Heart right ventricle (tissue), 16 donors: ENCODE measurements at regions of chr5 and their contacts with region 1.

Region 1: DNA sequence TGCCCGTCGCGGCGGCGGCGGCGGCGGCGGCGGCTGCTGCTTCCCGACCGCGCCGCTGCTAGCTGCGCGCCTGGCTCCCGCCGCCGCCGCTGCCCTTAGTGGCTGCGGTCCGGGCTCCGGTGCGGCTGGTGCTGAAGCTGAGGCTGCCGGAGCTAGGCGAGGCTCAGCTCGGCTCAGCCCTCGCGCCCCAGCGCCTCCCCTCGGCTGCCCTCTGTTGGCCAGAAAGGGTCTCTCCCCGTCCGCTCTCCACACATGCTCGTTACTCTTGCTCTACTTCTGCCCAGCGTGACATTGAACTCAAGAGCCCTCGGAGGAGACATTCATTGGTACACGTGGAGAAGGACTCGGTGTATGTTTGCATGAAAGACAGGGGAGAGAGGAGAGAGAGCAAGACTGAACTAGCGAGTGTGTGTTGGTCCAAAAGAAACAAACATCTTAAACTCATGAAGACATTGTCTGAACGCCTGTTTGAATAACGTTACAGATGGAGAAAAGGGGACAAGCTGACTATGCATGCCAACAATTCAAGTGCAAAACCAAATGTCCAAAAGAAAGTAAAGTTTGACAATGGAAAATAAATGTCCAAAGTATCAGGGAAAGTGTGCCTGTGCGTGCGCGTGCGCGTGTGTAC is at the start of gene HCN1:
- DNase-seq: peak; percentile 59 to 80
- ATAC-seq: peak; percentile 93 to 100 (median 98)
- H3K4me3 ChIP-seq: peak within 1 kb of the TSS in 9 of 10 donors; percentile 10 to 27 (median 20)
- H3K27ac ChIP-seq: no peak within 1 kb of the TSS
- H3K4me1 ChIP-seq: peaks cover 5 to 13% (median 10%) of the 10 kb centered on the region in 9 donors
- H3K27me3 ChIP-seq: peaks cover 6 to 80% (median 44%) of the 10 kb centered on the region in 7 donors
- CTCF ChIP-seq: peak; percentile 40 to 80 (median 72)
- total RNA-seq, gene HCN1: 0.05 to 0.12 (median 0.07) TPM in 7 of 10 donors, not detected in the others

Region 2: GRCh38 chr5:44952376-44952775 is 743.9 kb before region 1 on chr5:
- intact Hi-C with region 1: loop called in 1 of 10 experiments (anchors 10 kb)
- DNase-seq: no peak
- ATAC-seq: no peak
- H3K4me3 ChIP-seq: no peak overlapping the region
- H3K27ac ChIP-seq: no peak overlapping the region
- H3K4me1 ChIP-seq: no peaks in the 10 kb centered on the region
- H3K27me3 ChIP-seq: no peaks in the 10 kb centered on the region
- CTCF ChIP-seq: peak; percentile 24 to 66 (median 51)